ENCODE measurements at regions of chr17 and their contacts with region 1.

Region 1: DNA sequence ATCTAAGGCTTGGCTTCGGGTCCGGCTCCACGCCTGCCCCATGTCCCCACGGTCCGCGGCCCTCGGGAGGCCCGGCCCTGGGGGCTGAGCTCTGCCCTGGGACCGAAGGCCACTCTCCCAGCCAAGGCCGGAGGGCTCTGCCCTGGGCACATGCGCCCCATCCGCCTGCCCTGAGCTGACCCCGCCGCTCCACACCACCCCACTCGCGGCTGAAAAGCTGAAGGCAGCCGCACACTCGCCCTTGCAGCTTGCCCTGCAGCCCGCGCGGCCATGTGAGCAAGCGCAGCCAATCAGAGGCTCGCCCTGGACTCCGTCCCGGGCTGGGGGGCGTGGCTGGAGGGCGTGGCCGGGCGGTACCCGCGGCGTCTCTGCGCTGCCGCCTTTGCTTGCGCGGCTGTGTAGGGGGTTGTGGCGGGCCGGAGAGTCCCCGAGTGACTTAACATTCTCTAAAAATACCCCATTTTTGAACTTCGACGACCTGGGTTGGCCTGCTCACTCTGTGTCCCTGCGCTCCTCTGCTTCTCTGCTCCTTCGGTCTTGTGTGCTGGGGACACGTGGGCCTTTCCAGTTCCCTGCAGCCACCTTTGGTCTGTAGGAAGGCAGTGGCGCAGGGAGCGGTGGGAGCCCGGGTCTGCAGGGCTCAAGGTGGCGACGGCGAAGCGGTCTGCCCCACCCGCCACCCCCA is 8.8 kb upstream of the MAP2K3 start:
- DNase-seq: peak; percentile 83 to 88 (median 85)
- H3K4me3 ChIP-seq: peak overlapping the region; percentile 33 to 81 (median 48)
- H3K4me3 Mint-ChIP-seq: peak overlapping the region; percentile 74 to 89
- H3K27ac ChIP-seq: no peak overlapping the region
- H3K27ac Mint-ChIP-seq: peak overlapping the region in 4 of 7 donors; percentile 30 to 81 (median 64)
- H3K4me1 ChIP-seq: peaks cover 41 to 52% of the 10 kb centered on the region in 2 donors
- H3K4me1 Mint-ChIP-seq: peaks cover 44% of the 10 kb centered on the region
- H3K27me3 ChIP-seq: no peaks in the 10 kb centered on the region
- H3K27me3 Mint-ChIP-seq: peaks cover 8 to 10% (median 9%) of the 10 kb centered on the region in 3 donors
- CTCF ChIP-seq: no peak

Region 2: GRCh38 chr17:21043286-21044232 is 232.2 kb before region 1 on chr17:
- intact Hi-C with region 1: loop called (anchors 5 to 10 kb)
- DNase-seq: peak in 1 of 3 donors; percentile 99
- H3K4me3 ChIP-seq: peak overlapping the region; percentile 41 to 89 (median 42)
- H3K4me3 Mint-ChIP-seq: peak overlapping the region; percentile 72 to 84
- H3K27ac ChIP-seq: peak overlapping the region; percentile 74 to 85
- H3K27ac Mint-ChIP-seq: peak overlapping the region; percentile 80 to 90 (median 85)
- H3K4me1 ChIP-seq: peaks cover 28 to 30% of the 10 kb centered on the region in 2 donors
- H3K4me1 Mint-ChIP-seq: peaks cover 25% of the 10 kb centered on the region
- H3K27me3 ChIP-seq: no peaks in the 10 kb centered on the region
- H3K27me3 Mint-ChIP-seq: peaks cover 0 to 2% (median 0%) of the 10 kb centered on the region in 3 donors
- CTCF ChIP-seq: peak; percentile 95

Region 3: GRCh38 chr17:21194703-21195102 is 81.0 kb before region 1 on chr17:
- intact Hi-C with region 1: no loop called
- DNase-seq: no peak
- H3K4me3 ChIP-seq: no peak overlapping the region
- H3K4me3 Mint-ChIP-seq: no peak overlapping the region
- H3K27ac ChIP-seq: peak overlapping the region in 1 of 2 donors; percentile 61
- H3K27ac Mint-ChIP-seq: peak overlapping the region in 3 of 7 donors; percentile 5 to 58 (median 27)
- H3K4me1 ChIP-seq: peaks cover 11 to 12% of the 10 kb centered on the region in 2 donors
- H3K4me1 Mint-ChIP-seq: peaks cover 26% of the 10 kb centered on the region
- H3K27me3 ChIP-seq: no peaks in the 10 kb centered on the region
- H3K27me3 Mint-ChIP-seq: peaks cover 0 to under 1% (median 0%) of the 10 kb centered on the region in 3 donors
- CTCF ChIP-seq: no peak

Region 4: DNA sequence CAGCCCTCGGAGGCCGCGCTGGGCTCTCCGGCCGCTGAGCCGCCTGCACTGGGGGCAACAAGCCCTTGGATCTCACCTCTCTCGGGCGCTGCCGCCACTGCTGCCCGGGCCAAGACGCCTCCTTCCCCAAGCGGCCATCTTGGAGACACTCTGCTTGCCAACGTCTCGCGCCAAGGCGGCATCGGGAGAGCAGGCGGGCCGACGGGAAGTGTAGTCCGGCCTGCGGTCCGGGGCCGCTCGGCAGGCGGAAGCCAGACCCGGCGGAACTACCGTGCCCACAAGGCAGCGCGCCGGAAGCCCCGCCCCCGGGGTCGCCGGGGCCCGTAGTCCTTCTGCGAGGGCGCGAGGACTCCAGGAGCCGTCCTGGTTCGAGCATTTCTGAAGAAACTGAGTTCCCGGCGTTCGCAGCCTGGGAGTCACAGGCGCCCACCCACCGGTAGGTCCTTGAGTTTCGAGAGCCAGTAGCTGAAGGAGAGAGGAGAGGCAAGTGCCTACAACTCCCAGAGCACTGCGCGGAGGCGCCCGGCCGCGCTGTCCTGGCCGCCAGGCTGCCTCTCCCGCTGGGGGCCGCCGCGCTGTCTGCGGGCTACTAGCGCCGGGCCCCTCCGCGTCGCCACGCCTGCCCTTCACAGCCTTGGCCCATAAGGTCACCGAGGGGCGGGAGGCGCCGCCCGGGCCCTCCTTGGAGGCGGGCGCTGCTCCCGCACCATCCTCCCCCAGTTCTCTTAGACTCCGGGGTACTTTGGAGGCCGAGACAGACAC is 61.5 kb before region 1 on chr17 and contains the start of gene TMEM11:
- intact Hi-C with region 1: loop called in 1 of 2 experiments (anchors 5 kb)
- DNase-seq: peak; percentile 94 to 95 (median 95)
- H3K4me3 ChIP-seq: peak within 1 kb of the TSS; percentile 81 to 95 (median 93)
- H3K4me3 Mint-ChIP-seq: peak within 1 kb of the TSS; percentile 87 to 97
- H3K27ac ChIP-seq: peak within 1 kb of the TSS; percentile 93
- H3K27ac Mint-ChIP-seq: peak within 1 kb of the TSS; percentile 90 to 98 (median 97)
- H3K4me1 ChIP-seq: peaks cover 56 to 72% of the 10 kb centered on the region in 2 donors
- H3K4me1 Mint-ChIP-seq: peaks cover 69% of the 10 kb centered on the region
- H3K27me3 ChIP-seq: no peaks in the 10 kb centered on the region
- H3K27me3 Mint-ChIP-seq: no peaks in the 10 kb centered on the region
- CTCF ChIP-seq: peak; percentile 20
- polyA plus RNA-seq, gene TMEM11: 25.7 to 68.1 (median 59.5) TPM

Region 5: GRCh38 chr17:21318439-21318838 is 42.7 kb after region 1 on chr17:
- intact Hi-C with region 1: loop called (anchors 5 to 10 kb)
- DNase-seq: no peak
- H3K4me3 ChIP-seq: no peak overlapping the region
- H3K4me3 Mint-ChIP-seq: no peak overlapping the region
- H3K27ac ChIP-seq: no peak overlapping the region
- H3K27ac Mint-ChIP-seq: no peak overlapping the region
- H3K4me1 ChIP-seq: peaks cover 9 to 17% of the 10 kb centered on the region in 2 donors
- H3K4me1 Mint-ChIP-seq: peaks cover 14% of the 10 kb centered on the region
- H3K27me3 ChIP-seq: no peaks in the 10 kb centered on the region
- H3K27me3 Mint-ChIP-seq: peaks cover 4 to 8% (median 5%) of the 10 kb centered on the region in 3 donors
- CTCF ChIP-seq: no peak